Lower leg skin (tissue), 4 donors: ENCODE measurements at regions of chr10 and their contacts with region 1.

Region 1: GRCh38 chr10:45607276-45607675 is 65.3 kb downstream of the ZFAND4 start:
- DNase-seq: no peak
- H3K4me3 ChIP-seq: no peak overlapping the region
- CTCF ChIP-seq: no peak
- POLR2A ChIP-seq: no peak

Region 2: GRCh38 chr10:45569471-45569870 is 37.8 kb before region 1 on chr10:
- intact Hi-C with region 1: no loop called
- DNase-seq: no peak
- H3K4me3 ChIP-seq: no peak overlapping the region
- CTCF ChIP-seq: no peak
- POLR2A ChIP-seq: no peak

Region 3: DNA sequence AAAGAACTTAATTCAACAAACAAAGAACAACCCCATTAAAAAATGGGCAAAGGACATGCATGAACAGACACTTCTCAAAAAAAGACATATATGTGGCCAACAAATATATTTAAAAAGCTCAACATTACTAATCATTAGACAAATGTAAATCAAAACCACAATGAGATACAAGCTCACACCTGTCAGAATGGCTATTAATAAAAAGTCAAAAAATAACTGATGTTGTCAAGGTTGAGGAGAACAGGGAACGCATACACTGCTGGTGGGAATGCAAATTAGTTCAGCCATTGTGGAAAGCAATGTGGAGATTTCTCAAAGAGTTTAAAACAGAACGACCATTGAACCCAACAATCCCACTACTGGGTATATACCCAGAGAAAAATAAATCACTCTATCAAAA is 46.2 kb after region 1 on chr10:
- intact Hi-C with region 1: loop called (anchors 1 kb)
- DNase-seq: no peak
- H3K4me3 ChIP-seq: no peak overlapping the region
- CTCF ChIP-seq: no peak
- POLR2A ChIP-seq: no peak